ENCODE measurements at regions of chr5 and their contacts with region 1.

Region 1: GRCh38 chr5:115601701-115602590 is at the start of gene TICAM2:
- DNase-seq: peak; percentile 73 to 85 (median 78)
- ATAC-seq: peak; percentile 56 to 91 (median 80)
- H3K4me3 ChIP-seq: peak within 1 kb of the TSS; percentile 70 to 90 (median 84)
- H3K27ac ChIP-seq: peak within 1 kb of the TSS; percentile 84 to 97 (median 94)
- H3K4me1 ChIP-seq: peaks cover 6 to 52% (median 30%) of the 10 kb centered on the region in 12 donors
- H3K27me3 ChIP-seq: no peaks in the 10 kb centered on the region
- CTCF ChIP-seq: peak in 8 of 12 donors; percentile 17 to 55 (median 43)
- POLR2A ChIP-seq: peak in 1 of 2 donors; percentile 37
- total RNA-seq, gene TICAM2: 0.75 to 4.1 (median 2.1) TPM

Region 2: DNA sequence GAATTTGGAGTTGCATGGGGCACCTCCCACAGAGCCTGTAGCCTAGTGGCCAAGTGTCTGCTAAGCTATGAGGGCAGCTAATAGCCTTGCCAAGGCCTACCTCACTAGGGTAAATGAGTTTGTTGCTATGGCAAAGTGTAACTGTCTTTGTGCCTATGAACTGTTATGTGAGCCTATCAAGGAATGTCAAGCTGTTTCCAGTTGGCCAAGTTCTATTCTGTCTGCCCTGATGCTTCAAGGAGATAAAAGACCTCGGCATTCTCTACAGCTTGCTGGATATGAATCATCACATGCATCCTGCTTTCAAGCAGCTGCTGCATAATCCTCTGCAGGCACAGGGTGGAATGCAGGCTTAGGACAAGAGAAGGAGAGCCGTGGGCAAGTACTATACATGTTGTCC is 235.7 kb before region 1 on chr5:
- intact Hi-C with region 1: no loop called
- DNase-seq: peak in 1 of 5 donors; percentile 37
- ATAC-seq: peak; percentile 42 to 84 (median 79)
- H3K4me3 ChIP-seq: no peak overlapping the region
- H3K27ac ChIP-seq: peak overlapping the region in 6 of 12 donors; percentile 6 to 56 (median 30)
- H3K4me1 ChIP-seq: peaks cover 0 to 12% (median 4%) of the 10 kb centered on the region in 12 donors
- H3K27me3 ChIP-seq: no peaks in the 10 kb centered on the region
- CTCF ChIP-seq: no peak
- POLR2A ChIP-seq: no peak

Region 3: DNA sequence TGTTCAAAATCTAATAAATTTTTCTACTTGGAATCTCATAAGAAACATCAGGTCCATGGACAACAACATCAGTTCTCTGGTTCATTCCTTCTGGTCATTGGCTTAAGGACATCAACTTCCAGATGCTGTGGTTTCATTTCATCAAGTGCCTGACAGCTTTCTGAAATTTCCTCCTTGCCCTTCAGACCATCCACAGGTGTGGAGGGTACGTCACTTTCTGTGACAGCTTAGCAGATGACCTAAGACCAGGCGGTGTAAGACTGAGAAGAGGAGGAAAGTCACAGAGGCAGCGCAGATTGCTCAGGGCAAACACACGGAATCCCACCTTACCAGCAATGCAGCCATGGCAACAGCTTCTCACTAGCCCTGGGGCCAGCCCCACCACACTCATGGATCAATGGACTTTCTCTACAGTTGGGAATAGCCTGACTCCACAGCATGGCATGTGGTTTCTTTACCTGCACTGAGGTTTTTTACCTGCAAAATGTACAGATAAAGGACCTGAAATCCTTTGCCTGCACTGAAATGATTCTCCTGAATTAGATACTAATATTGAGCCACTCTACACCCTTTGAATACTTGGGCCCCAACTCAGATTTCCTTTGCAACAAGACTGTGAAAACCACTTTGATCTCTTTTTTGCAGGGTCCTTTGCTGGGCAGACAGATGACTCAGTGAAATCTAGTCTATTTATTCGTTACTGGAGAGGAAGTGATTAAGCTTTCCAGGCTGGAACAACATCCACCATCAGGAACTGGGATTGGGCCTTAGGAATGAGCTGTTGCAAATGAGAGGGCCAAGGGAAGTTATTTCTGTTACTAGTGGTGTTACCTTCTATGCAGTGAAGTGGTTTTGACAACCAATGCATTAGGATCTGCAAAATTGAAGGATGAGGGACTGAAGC is 26.5 kb before region 1 on chr5:
- intact Hi-C with region 1: no loop called
- DNase-seq: no peak
- ATAC-seq: no peak
- H3K4me3 ChIP-seq: no peak overlapping the region
- H3K27ac ChIP-seq: no peak overlapping the region
- H3K4me1 ChIP-seq: peaks cover 0 to 22% (median 0%) of the 10 kb centered on the region in 12 donors
- H3K27me3 ChIP-seq: no peaks in the 10 kb centered on the region
- CTCF ChIP-seq: no peak
- POLR2A ChIP-seq: no peak

Region 4: DNA sequence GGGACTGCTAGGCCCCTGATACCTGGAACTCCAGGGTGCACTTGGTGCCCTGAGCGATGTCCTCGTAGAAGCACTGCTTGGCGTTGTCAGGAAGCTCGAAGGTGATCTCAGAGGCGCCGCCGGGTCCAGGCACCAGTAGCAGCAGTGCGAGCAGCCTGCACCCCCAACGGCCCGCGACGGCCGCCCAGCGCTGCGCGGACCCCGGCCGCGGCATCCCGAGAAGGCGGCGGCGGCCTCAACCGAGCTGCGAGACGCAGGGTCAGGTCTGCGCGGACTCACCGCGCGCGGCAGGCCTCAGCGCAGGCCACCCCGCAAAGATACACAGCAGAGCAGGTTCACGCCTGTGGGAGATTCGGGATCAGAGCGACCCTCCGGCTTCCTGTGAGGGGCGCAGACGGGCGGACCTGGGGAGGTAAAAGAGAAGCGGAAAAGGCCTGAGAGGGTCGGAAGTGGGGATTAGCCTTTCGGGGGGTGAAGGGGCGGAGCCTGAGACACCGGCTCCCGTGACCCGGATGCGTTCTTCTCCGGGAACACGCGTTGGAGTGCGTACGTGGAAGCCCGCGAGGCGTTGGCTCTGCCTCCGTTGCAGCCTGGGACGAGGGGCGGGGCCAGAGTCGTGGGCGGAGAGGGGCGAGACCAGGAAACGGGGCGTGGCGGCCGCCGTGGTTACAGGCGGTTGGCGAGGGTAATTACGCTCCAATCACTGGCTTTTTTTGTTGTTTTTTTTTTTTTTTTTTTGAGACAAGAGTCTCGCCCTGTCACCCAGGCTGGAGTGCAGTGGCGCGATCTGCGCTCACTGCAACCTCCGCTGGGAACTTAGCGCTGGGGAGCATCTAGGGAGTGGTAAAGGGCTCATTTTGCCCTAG is 23.9 kb after region 1 on chr5 and contains the start of gene TMED7:
- intact Hi-C with region 1: loop called in 1 of 10 experiments (anchors 2 kb)
- DNase-seq: peak; percentile 100
- ATAC-seq: peak; percentile 99 to 100 (median 99)
- H3K4me3 ChIP-seq: peak within 1 kb of the TSS; percentile 65 to 98 (median 84)
- H3K27ac ChIP-seq: peak within 1 kb of the TSS; percentile 79 to 99 (median 94)
- H3K4me1 ChIP-seq: peaks cover 13 to 50% (median 39%) of the 10 kb centered on the region in 12 donors
- H3K27me3 ChIP-seq: no peaks in the 10 kb centered on the region
- CTCF ChIP-seq: peak in 3 of 12 donors; percentile 5 to 20 (median 13)
- POLR2A ChIP-seq: peak; percentile 39 to 97
- total RNA-seq, gene TMED7: 58.4 to 99.1 (median 82.3) TPM